ENCODE measurements at regions of chr11 and their contacts with region 1.

Region 1: GRCh38 chr11:69317401-69318092 is 23.6 kb downstream of the MYEOV start:
- DNase-seq: no peak

Region 2: GRCh38 chr11:69122642-69123431 is 194.7 kb before region 1 on chr11:
- in situ Hi-C with region 1: no loop called
- DNase-seq: peak; percentile 23

Region 3: DNA sequence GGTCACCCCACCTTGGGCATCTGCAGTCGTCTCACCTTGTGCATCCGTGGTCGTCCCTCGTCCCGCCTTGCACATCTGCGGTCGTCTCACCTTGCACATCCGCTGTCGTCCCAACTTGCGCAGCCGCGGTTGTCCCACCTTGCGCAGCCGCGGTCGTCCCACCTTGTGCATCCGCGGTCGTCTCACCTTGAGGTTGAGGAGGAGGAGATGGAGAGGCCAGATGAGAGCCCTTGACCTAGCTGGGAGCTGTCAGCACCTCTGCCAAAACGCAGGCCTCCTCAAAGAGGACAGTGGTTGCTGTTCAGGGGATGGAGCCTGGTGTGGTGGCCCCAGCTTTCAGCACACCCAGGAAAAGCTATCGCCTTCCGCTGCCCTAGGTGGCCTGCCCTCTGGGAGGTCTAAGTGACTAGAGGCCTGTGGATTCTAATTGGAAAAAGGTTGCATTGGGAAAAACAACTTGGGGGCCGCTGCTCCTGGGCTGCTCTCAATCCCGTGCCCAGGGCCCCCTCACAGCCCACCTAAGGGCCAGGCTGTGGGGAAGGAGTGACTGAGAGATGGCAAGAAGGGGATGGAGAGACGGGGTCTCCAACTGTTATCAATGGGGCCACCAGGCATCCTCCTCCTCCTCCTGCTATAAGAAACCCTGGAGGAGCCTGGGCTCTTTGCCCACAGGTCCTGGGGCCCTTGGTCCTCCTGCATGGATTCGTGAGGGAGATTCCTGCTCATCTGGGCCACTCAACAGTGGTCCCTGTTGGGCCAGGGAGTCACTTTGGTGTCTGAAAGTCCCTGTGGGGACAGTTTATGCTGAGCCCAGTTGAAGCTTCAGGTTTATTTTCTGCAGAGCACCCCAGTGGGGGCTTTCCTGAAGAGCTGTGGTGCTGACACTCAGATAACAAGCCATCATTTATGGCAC is 67.3 kb after region 1 on chr11:
- in situ Hi-C with region 1: loop called (anchors 5 kb)
- DNase-seq: no peak